Right ventricle myocardium superior (tissue), 1 donor: ENCODE measurements at regions of chr20 and their contacts with region 1.

Region 1: GRCh38 chr20:19974626-19975435 is 42.3 kb upstream of the NAA20 start:
- DNase-seq: peak; percentile 91
- ATAC-seq: peak; percentile 83

Region 2: DNA sequence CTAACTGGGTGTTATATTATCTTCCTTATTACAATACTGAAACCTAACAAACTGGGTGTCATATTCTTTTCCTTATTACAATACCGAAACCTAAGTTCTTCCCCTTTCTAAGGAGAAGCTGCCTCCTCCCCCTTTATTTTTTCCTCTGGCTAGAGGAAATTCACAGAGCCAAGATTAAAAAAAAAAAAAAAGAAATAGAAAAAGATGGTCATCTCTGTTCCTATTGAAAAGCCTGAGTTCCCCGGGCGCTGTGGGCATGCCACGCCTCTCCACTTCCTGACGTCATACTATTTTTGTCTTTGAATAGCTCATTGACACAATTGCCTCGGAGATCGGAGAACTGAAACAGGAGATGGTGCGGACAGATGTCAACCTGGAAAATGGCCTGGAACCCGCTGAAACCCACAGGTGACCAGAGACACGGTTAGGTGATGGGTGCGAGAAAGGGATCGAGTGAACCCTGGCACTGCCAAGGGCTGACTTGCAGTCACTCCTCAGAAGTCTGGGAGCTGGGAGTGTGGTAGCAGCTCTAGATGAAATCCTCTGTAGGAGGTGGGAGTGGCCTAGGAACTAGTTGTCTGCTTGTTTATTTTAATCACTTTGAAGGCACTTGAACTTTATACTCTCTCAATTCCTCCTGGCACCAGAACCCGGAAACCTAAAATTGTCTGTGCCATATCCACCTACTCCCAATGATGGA is 39.9 kb before region 1 on chr20:
- intact Hi-C with region 1: loop called (anchors 5 kb)
- DNase-seq: peak; percentile 65
- ATAC-seq: peak; percentile 62

Region 3: DNA sequence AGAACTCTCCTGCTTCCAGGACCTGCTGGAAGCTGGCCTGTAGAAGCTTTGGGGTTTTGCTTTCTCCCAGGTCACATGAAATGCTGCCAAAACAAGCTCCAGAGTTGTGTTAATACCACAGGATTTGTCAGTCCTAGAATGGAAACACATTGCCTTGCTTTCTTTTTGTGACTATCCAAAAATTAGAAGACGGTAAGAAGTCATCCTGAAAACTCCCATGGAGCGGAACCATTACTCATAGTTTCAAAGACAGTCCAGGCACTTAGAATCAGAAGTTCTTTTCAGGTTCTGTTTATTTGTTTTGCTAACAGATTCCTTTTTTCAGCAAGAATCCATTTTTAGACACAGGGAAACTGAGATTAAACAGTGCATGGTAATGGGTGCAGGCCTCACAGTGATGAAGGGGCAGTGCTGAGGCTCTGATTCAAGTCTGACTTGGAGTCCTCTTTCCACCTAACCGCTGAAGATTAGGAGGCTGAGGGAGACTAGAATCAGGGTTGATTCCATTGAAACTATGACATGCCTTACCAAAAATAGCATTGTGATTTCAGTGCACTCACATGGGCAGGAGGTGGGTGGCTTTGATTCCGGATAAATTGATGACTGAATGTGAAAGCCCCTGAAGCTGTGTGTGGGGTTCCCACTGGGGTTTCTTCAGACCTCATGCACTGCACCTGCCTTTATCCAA is 29.9 kb before region 1 on chr20:
- intact Hi-C with region 1: loop called (anchors 5 kb)
- DNase-seq: no peak
- ATAC-seq: peak; percentile 64